Aorta (tissue), 5 donors: ENCODE measurements at regions of chrX and their contacts with region 1.

Region 1: GRCh38 chrX:152632445-152633097 is 5.1 kb upstream of the GABRQ start:
- DNase-seq: peak in 1 of 2 donors; percentile 56
- ATAC-seq: peak; percentile 31
- H3K4me3 ChIP-seq: no peak overlapping the region
- H3K27ac ChIP-seq: no peak overlapping the region
- H3K4me1 ChIP-seq: no peaks in the 10 kb centered on the region
- H3K27me3 ChIP-seq: no peaks in the 10 kb centered on the region

Region 2: DNA sequence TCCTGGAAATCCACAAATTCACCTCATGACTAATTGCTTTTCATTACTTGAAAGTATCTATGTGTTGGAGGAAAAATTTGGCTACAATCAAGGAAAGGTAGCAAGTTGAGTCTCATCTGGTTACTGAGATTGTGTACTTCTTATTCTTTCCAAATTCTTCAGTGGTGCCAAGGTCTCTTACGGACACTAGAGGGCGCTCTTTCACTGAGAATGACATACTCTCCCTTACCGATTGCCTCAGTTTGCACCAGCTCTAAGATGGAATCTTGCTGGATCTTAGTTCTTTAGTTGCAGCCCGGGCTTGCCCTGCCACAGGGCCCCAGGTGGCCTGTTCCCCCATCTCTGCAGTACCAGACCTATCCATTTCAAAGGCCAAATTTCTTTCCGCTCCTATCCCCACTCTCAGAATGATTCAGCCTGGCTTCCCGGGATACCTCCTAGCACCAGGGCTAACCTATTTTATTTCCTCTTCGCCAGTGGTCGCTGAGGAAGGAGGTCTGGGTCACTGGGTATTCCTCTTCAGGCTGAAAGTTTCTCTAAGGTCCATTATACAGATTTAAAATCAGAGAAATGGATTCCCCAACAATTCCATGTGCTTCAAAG is 1480.8 kb before region 1 on chrX:
- intact Hi-C with region 1: loop called in 1 of 2 experiments (anchors 5 kb)
- DNase-seq: no peak
- ATAC-seq: no peak
- H3K4me3 ChIP-seq: no peak overlapping the region
- H3K27ac ChIP-seq: no peak overlapping the region
- H3K4me1 ChIP-seq: no peaks in the 10 kb centered on the region
- H3K27me3 ChIP-seq: no peaks in the 10 kb centered on the region

Region 3: DNA sequence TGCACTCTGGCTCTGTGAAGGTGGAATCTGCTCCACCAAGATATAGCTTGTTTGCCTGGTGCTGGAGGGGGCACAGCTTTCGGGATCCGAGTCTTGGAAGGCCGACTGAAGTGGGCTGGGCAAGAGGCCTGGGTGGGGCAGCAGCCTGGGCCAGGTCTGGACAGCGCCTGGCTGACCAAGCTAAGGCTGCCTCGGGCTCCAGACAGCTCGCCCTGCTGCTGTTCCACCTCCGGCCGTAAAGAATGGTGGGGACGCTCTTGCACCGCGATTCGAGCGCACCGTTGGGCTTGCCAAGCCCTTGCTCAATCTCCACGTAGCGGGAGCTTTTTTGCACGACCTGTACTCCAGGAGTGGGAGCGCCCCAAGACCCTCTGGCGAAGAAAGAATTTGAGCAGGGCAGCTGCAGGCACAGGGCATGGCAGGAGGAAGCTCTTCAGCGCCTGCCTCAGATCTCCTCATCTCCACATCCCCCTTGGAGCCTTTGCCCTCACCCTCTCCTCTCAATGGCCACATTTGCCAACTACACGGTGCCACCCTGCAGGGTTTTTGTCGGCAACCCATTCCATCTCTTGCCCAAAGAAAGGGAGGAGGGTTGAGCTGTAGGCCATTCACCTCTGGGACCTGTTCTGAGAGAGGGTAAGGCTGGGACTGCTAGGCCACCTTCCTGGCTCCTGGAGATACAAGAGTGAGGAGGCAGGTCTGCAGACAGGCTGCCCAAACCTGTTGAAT is 879.1 kb before region 1 on chrX:
- intact Hi-C with region 1: loop called (anchors 2 to 5 kb)
- DNase-seq: peak; percentile 58 to 82
- ATAC-seq: peak; percentile 82
- H3K4me3 ChIP-seq: no peak overlapping the region
- H3K27ac ChIP-seq: no peak overlapping the region
- H3K4me1 ChIP-seq: no peaks in the 10 kb centered on the region
- H3K27me3 ChIP-seq: no peaks in the 10 kb centered on the region